BJ (cell line): ENCODE measurements at regions of chr12 and their contacts with region 1.

Region 1: GRCh38 chr12:115752913-115753726 is 524.4 kb downstream of the MED13L start:
- DNase-seq: no peak
- H3K4me3 ChIP-seq: no peak overlapping the region
- H3K27me3 ChIP-seq: no peaks in the 10 kb centered on the region
- CTCF ChIP-seq: peak; percentile 70

Region 2: DNA sequence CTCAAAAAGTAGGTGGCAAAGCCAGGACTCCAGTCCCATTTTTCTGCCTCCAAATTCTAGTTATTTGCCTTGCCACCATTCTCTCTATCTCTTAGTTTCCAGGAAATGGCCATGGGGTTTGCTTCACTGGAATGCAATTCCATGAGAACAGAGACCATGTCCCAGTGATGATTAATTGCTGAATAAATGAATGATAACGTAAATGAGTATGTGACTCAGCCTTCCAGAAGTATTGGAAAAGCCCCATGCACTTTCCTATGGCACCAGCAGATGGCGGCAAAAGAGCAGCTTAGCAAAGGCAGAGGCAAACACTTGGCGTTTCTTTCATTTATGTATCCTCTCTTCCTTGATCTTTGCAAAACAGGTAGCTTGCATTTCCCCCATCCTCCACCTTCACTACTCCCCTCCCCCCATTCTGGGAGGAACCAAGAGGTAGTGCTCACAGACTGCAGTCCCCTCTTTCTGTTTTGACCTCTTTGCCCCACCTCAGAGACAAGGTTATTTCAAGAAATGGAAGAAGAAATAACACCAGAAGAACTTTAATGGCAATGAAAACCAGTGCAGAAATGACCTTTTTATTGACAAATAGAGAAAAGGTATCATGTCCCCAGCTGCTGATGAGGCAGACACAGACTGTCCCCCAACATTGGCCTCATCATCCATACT is 1090.5 kb before region 1 on chr12:
- CTCF ChIA-PET with region 1: interaction called, 59 read pairs
- POLR2A ChIA-PET with region 1: interaction called, 7 read pairs
- DNase-seq: peak; percentile 91
- H3K4me3 ChIP-seq: no peak overlapping the region
- H3K27me3 ChIP-seq: no peaks in the 10 kb centered on the region
- CTCF ChIP-seq: peak; percentile 92

Region 3: GRCh38 chr12:115166698-115167315 is 586.3 kb before region 1 on chr12:
- CTCF ChIA-PET with region 1: interaction called, 10 read pairs
- POLR2A ChIA-PET with region 1: no interaction called
- DNase-seq: no peak
- H3K4me3 ChIP-seq: no peak overlapping the region
- H3K27me3 ChIP-seq: no peaks in the 10 kb centered on the region
- CTCF ChIP-seq: peak; percentile 37